SK-N-SH (cell line): ENCODE measurements at regions of chr16 and their contacts with region 1.

Region 1: GRCh38 chr16:8878521-8878911 is 3.6 kb upstream of the LITAFD start:
- DNase-seq: no peak
- H3K4me3 ChIP-seq: no peak overlapping the region
- H3K27ac ChIP-seq: peak overlapping the region in 1 of 2 experiments; percentile 35; a peak in 1 of 4 replicates
- H3K4me1 ChIP-seq: peaks cover 0 to 3% of the 10 kb centered on the region in 2 experiments; a peak in 1 of 4 replicates
- H3K27me3 ChIP-seq: no peaks in the 10 kb centered on the region
- CTCF ChIP-seq: no peak
- EP300 ChIP-seq: peak in 1 of 2 experiments; percentile 14; a peak in 1 of 4 replicates
- RAD21 ChIP-seq: no peak

Region 2: GRCh38 chr16:8655184-8655717 is 223.3 kb before region 1 on chr16:
- CTCF ChIA-PET with region 1: interaction called, 71 read pairs
- POLR2A ChIA-PET with region 1: no interaction called
- DNase-seq: no peak
- H3K4me3 ChIP-seq: no peak overlapping the region
- H3K27ac ChIP-seq: no peak overlapping the region
- H3K4me1 ChIP-seq: peaks cover 0 to 3% of the 10 kb centered on the region in 2 experiments; a peak in 1 of 4 replicates
- H3K27me3 ChIP-seq: no peaks in the 10 kb centered on the region
- CTCF ChIP-seq: peak; percentile 38
- EP300 ChIP-seq: no peak
- RAD21 ChIP-seq: peak; percentile 36

Region 3: GRCh38 chr16:8674413-8675022 is 204.0 kb before region 1 on chr16 and contains the start of gene ABAT:
- CTCF ChIA-PET with region 1: interaction called, 14 read pairs
- POLR2A ChIA-PET with region 1: no interaction called
- DNase-seq: peak; percentile 98
- H3K4me3 ChIP-seq: peak within 1 kb of the TSS; percentile 77 to 83
- H3K27ac ChIP-seq: peak within 1 kb of the TSS in 1 of 2 experiments; percentile 72; a peak in 1 of 4 replicates
- H3K4me1 ChIP-seq: peaks cover 20 to 32% of the 10 kb centered on the region in 2 experiments; a peak in 2 of 4 replicates
- H3K27me3 ChIP-seq: no peaks in the 10 kb centered on the region
- CTCF ChIP-seq: no peak
- EP300 ChIP-seq: no peak
- RAD21 ChIP-seq: no peak
- polyA plus RNA-seq, gene ABAT: 4.7 and 7.3 TPM in 2 replicates

Region 4: GRCh38 chr16:8806272-8806983 is 72.1 kb before region 1 on chr16:
- CTCF ChIA-PET with region 1: interaction called, 10 read pairs
- POLR2A ChIA-PET with region 1: no interaction called
- DNase-seq: peak; percentile 56
- H3K4me3 ChIP-seq: no peak overlapping the region
- H3K27ac ChIP-seq: peak overlapping the region in 1 of 2 experiments; percentile 88; a peak in 2 of 4 replicates
- H3K4me1 ChIP-seq: peaks cover 0 to 32% of the 10 kb centered on the region in 2 experiments; a peak in 1 of 4 replicates
- H3K27me3 ChIP-seq: no peaks in the 10 kb centered on the region
- CTCF ChIP-seq: no peak
- EP300 ChIP-seq: peak in 1 of 2 experiments; percentile 72; a peak in 1 of 4 replicates
- RAD21 ChIP-seq: peak; percentile 34; the same call in 1 of the 2 replicates

Region 5: GRCh38 chr16:8899709-8900317 is 21.3 kb after region 1 on chr16:
- CTCF ChIA-PET with region 1: interaction called, 14 read pairs
- POLR2A ChIA-PET with region 1: no interaction called
- DNase-seq: no peak
- H3K4me3 ChIP-seq: no peak overlapping the region
- H3K27ac ChIP-seq: no peak overlapping the region
- H3K4me1 ChIP-seq: no peaks in the 10 kb centered on the region
- H3K27me3 ChIP-seq: no peaks in the 10 kb centered on the region
- CTCF ChIP-seq: no peak
- EP300 ChIP-seq: no peak
- RAD21 ChIP-seq: peak; percentile 1; the same call in 1 of the 2 replicates

Region 6: GRCh38 chr16:8967132-8967821 is 88.8 kb after region 1 on chr16:
- CTCF ChIA-PET with region 1: no interaction called
- POLR2A ChIA-PET with region 1: no interaction called
- DNase-seq: no peak
- H3K4me3 ChIP-seq: no peak overlapping the region
- H3K27ac ChIP-seq: no peak overlapping the region
- H3K4me1 ChIP-seq: peaks cover 0 to 3% of the 10 kb centered on the region in 2 experiments; a peak in 1 of 4 replicates
- H3K27me3 ChIP-seq: no peaks in the 10 kb centered on the region
- CTCF ChIP-seq: no peak
- EP300 ChIP-seq: no peak
- RAD21 ChIP-seq: no peak

Region 7: DNA sequence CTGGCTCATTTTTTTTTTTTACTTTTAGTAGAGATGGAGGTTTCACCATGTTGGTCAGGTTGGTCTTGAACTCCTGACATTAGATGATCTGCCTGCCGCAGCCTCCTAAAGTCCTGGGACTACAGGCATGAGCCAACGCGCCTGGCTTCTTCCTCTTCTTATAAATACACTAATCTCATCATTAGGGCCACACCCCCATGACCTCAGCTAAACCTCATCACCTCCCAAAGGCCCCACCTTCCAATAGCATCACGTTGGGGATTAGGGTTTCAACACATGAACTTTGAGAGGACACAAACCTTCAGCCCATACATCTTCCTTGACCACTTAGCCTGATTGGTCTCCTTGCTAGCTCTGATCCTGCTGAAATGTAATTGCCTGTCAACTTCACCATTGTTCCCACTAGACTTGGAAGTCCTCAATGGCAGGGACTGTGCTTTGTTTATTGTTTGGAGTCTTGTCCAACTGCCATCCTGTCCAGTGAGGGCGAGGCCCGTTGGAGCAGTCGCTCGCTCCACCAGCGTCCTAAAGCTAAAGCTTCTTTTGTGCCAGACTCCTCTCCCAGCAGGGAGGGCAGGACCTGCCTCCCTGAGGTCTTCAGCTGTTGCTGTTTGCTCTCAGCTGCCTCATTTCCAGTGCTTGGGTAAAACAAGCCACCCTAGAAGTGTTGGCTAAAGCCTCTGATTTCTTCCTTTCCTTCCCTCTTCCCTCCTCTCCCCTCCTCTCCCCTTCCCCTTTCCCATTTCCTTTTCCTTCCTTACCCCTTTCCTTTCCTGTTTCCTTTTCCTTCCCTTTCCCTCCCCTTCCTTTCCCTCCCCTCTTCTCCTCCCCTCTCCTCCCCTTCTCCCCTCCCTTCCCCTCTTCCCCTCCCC is 298.3 kb after region 1 on chr16:
- CTCF ChIA-PET with region 1: no interaction called
- POLR2A ChIA-PET with region 1: no interaction called
- DNase-seq: no peak
- H3K4me3 ChIP-seq: no peak overlapping the region
- H3K27ac ChIP-seq: no peak overlapping the region
- H3K4me1 ChIP-seq: no peaks in the 10 kb centered on the region
- H3K27me3 ChIP-seq: no peaks in the 10 kb centered on the region
- CTCF ChIP-seq: no peak
- EP300 ChIP-seq: no peak
- RAD21 ChIP-seq: no peak